ENCODE measurements at regions of chrX and their contacts with region 1.

Region 1: GRCh38 chrX:88613338-88613737 is 133.7 kb upstream of the CPXCR1 start:
- DNase-seq: peak; percentile 56
- ATAC-seq: peak; percentile 89
- H3K4me3 ChIP-seq: no peak overlapping the region
- H3K27ac ChIP-seq: peak overlapping the region; percentile 66
- H3K4me1 ChIP-seq: peaks cover 12% of the 10 kb centered on the region
- H3K27me3 ChIP-seq: no peaks in the 10 kb centered on the region
- CTCF ChIP-seq: peak; percentile 70
- EP300 ChIP-seq: no peak
- POLR2A ChIP-seq: no peak
- RAD21 ChIP-seq: peak; percentile 60; the same call in 1 of the 2 replicates

Region 2: GRCh38 chrX:87583679-87584078 is 1029.7 kb before region 1 on chrX:
- CTCF ChIA-PET with region 1: interaction called, 3 read pairs
- POLR2A ChIA-PET with region 1: no interaction called
- in situ Hi-C with region 1: no loop called
- intact Hi-C with region 1: loop called (anchors 10 kb)
- DNase-seq: peak; percentile 3
- ATAC-seq: peak; percentile 60; the same call in 2 of the 3 replicates
- H3K4me3 ChIP-seq: no peak overlapping the region
- H3K27ac ChIP-seq: no peak overlapping the region
- H3K4me1 ChIP-seq: no peaks in the 10 kb centered on the region
- H3K27me3 ChIP-seq: no peaks in the 10 kb centered on the region
- CTCF ChIP-seq: peak; percentile 47
- EP300 ChIP-seq: no peak
- POLR2A ChIP-seq: no peak
- RAD21 ChIP-seq: no peak

Region 3: DNA sequence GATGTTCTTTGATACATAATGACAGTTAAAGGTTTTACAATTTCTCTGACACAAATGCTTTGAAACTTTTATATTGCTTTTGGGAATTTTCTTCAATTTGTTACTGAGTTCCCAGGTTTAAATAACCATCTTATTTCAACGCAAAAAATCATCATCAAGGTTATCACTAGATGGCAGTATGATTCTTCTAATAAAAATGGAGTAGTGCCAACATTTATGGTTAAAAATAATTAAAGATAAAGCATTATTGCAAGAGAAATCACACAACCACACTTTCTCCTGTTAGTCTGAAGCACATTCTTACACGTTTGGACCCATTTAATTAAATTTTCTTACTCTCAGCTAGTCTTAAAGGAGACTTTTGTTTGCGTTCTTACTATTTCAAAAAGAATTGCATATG is 477.6 kb before region 1 on chrX:
- CTCF ChIA-PET with region 1: interaction called, 11 read pairs
- POLR2A ChIA-PET with region 1: no interaction called
- in situ Hi-C with region 1: loop called (anchors 10 kb)
- intact Hi-C with region 1: loop called (anchors 1 kb)
- DNase-seq: peak; percentile 1
- ATAC-seq: no peak
- H3K4me3 ChIP-seq: no peak overlapping the region; a peak in 1 of 6 replicates
- H3K27ac ChIP-seq: no peak overlapping the region
- H3K4me1 ChIP-seq: no peaks in the 10 kb centered on the region
- H3K27me3 ChIP-seq: no peaks in the 10 kb centered on the region
- CTCF ChIP-seq: peak; percentile 26
- EP300 ChIP-seq: no peak
- POLR2A ChIP-seq: no peak
- RAD21 ChIP-seq: no peak

Region 4: GRCh38 chrX:88425739-88426138 is 187.6 kb before region 1 on chrX:
- CTCF ChIA-PET with region 1: interaction called, 18 read pairs
- POLR2A ChIA-PET with region 1: interaction called, 3 read pairs
- in situ Hi-C with region 1: loop called (anchors 5 kb)
- intact Hi-C with region 1: loop called (anchors 1 kb)
- DNase-seq: peak; percentile 18
- ATAC-seq: no peak
- H3K4me3 ChIP-seq: no peak overlapping the region
- H3K27ac ChIP-seq: no peak overlapping the region
- H3K4me1 ChIP-seq: peaks cover 8% of the 10 kb centered on the region; the same call in 1 of the 2 replicates
- H3K27me3 ChIP-seq: no peaks in the 10 kb centered on the region
- CTCF ChIP-seq: peak; percentile 52
- EP300 ChIP-seq: no peak
- POLR2A ChIP-seq: no peak
- RAD21 ChIP-seq: no peak

Region 5: GRCh38 chrX:88443266-88443665 is 170.1 kb before region 1 on chrX:
- CTCF ChIA-PET with region 1: no interaction called
- POLR2A ChIA-PET with region 1: no interaction called
- in situ Hi-C with region 1: no loop called
- intact Hi-C with region 1: loop called (anchors 5 kb)
- DNase-seq: no peak
- ATAC-seq: no peak
- H3K4me3 ChIP-seq: no peak overlapping the region
- H3K27ac ChIP-seq: no peak overlapping the region
- H3K4me1 ChIP-seq: peaks cover 29% of the 10 kb centered on the region
- H3K27me3 ChIP-seq: no peaks in the 10 kb centered on the region
- CTCF ChIP-seq: no peak
- EP300 ChIP-seq: no peak
- POLR2A ChIP-seq: no peak
- RAD21 ChIP-seq: no peak

Region 6: GRCh38 chrX:88560673-88561330 is 52.5 kb before region 1 on chrX:
- CTCF ChIA-PET with region 1: no interaction called
- POLR2A ChIA-PET with region 1: no interaction called
- in situ Hi-C with region 1: no loop called
- intact Hi-C with region 1: loop called (anchors 2 kb)
- DNase-seq: peak; percentile 97
- ATAC-seq: peak; percentile 99
- H3K4me3 ChIP-seq: no peak overlapping the region
- H3K27ac ChIP-seq: peak overlapping the region; percentile 97
- H3K4me1 ChIP-seq: peaks cover 56% of the 10 kb centered on the region
- H3K27me3 ChIP-seq: no peaks in the 10 kb centered on the region
- CTCF ChIP-seq: no peak
- EP300 ChIP-seq: peak; percentile 91 to 100; a peak in 3 of 4 replicates
- POLR2A ChIP-seq: no peak
- RAD21 ChIP-seq: no peak

Region 7: GRCh38 chrX:88603237-88603636 is 10.1 kb before region 1 on chrX:
- CTCF ChIA-PET with region 1: no interaction called
- POLR2A ChIA-PET with region 1: no interaction called
- in situ Hi-C with region 1: no loop called
- intact Hi-C with region 1: no loop called
- DNase-seq: no peak
- ATAC-seq: no peak
- H3K4me3 ChIP-seq: no peak overlapping the region
- H3K27ac ChIP-seq: peak overlapping the region; percentile 98
- H3K4me1 ChIP-seq: peaks cover 57% of the 10 kb centered on the region
- H3K27me3 ChIP-seq: no peaks in the 10 kb centered on the region
- CTCF ChIP-seq: no peak
- EP300 ChIP-seq: no peak
- POLR2A ChIP-seq: no peak
- RAD21 ChIP-seq: no peak

Region 8: GRCh38 chrX:88735835-88736234 is 122.5 kb after region 1 on chrX:
- CTCF ChIA-PET with region 1: no interaction called
- POLR2A ChIA-PET with region 1: no interaction called
- in situ Hi-C with region 1: no loop called
- intact Hi-C with region 1: no loop called
- DNase-seq: no peak
- ATAC-seq: no peak
- H3K4me3 ChIP-seq: no peak overlapping the region
- H3K27ac ChIP-seq: no peak overlapping the region
- H3K4me1 ChIP-seq: no peaks in the 10 kb centered on the region
- H3K27me3 ChIP-seq: no peaks in the 10 kb centered on the region
- CTCF ChIP-seq: no peak
- EP300 ChIP-seq: no peak
- POLR2A ChIP-seq: no peak
- RAD21 ChIP-seq: no peak

Region 9: DNA sequence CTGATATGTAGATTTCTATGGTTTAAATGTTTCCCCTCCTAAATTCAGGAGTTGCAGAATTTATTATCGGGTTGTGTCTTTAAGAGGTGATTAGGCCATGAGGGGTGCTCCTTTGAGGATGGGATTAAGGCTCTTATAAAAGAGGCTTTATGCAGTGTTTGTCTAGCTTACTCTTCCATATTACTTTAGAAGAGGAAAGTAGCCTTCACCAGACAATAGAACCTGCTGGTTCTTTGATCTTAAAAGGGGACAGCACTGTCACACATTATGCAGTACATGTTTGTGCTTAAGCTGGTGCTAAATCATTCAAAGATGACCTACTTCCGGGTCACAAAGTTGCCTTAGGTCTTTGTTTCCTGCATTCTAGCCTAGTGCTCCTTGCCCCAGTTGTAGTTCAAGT is 214.7 kb after region 1 on chrX:
- CTCF ChIA-PET with region 1: no interaction called
- POLR2A ChIA-PET with region 1: no interaction called
- in situ Hi-C with region 1: no loop called
- intact Hi-C with region 1: no loop called
- DNase-seq: no peak
- ATAC-seq: no peak
- H3K4me3 ChIP-seq: no peak overlapping the region
- H3K27ac ChIP-seq: no peak overlapping the region
- H3K4me1 ChIP-seq: no peaks in the 10 kb centered on the region
- H3K27me3 ChIP-seq: no peaks in the 10 kb centered on the region
- CTCF ChIP-seq: no peak
- EP300 ChIP-seq: no peak
- POLR2A ChIP-seq: no peak
- RAD21 ChIP-seq: no peak

Region 10: DNA sequence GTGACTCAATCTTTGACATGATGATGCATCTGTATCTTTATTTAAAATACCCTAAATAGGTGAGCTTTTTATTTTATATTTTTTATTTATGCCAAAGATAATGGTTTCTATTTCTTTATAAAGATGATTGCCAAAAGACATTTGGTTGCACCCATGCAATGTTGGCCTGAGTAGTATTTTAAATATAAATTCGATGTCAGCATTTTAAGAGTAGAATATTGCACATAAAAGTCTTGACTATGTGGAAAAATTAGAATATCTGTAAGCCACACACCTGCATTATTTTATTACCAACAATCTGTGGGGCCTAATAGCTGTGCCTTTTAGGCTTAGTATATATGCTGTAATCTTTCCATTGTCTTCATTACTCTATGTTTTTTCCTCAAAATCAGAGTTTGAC is 225.1 kb after region 1 on chrX:
- CTCF ChIA-PET with region 1: no interaction called
- POLR2A ChIA-PET with region 1: no interaction called
- in situ Hi-C with region 1: no loop called
- intact Hi-C with region 1: no loop called
- DNase-seq: no peak
- ATAC-seq: no peak
- H3K4me3 ChIP-seq: no peak overlapping the region
- H3K27ac ChIP-seq: no peak overlapping the region
- H3K4me1 ChIP-seq: peaks cover 34% of the 10 kb centered on the region
- H3K27me3 ChIP-seq: no peaks in the 10 kb centered on the region
- CTCF ChIP-seq: no peak
- EP300 ChIP-seq: no peak
- POLR2A ChIP-seq: no peak
- RAD21 ChIP-seq: no peak

Measured in HepG2 (cell line).